Tibial artery (tissue), 4 donors: ENCODE measurements at regions of chr10 and their contacts with region 1.

Region 1: GRCh38 chr10:69428165-69428564 is 11.4 kb upstream of the TACR2 start:
- DNase-seq: no peak
- H3K4me3 ChIP-seq: no peak overlapping the region
- H3K27ac ChIP-seq: no peak overlapping the region
- H3K4me1 ChIP-seq: no peaks in the 10 kb centered on the region
- H3K27me3 ChIP-seq: no peaks in the 10 kb centered on the region
- CTCF ChIP-seq: no peak

Region 2: DNA sequence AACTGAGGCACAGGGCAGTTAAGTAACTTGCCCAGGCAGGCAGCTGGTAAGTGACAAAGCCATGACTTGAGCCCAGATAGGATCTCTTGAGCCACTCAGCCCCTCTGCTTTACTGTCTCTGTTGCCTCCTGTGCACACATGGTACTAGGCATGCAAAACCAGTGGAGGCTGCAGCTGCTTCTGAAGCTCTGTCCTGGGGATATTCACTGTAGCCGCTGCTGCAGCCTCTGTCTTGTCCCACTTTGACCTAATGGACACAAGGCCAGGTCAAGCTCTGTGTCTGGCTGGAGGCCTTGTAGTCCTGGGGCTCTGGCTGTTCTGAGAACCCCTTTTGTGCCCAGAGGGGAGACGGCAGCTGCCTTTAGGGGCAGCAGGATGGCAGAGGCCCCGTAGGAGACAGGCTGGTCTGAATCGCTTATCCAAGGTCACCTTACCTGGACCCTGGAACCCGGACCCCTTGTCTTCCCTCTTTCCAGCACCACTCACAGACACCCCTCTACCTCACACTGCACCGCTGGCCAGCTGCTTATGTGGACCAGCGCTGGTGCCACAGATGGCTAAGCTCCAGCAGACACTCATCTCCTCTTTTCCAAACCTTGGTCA is 80.7 kb after region 1 on chr10:
- intact Hi-C with region 1: loop called (anchors 2 kb)
- DNase-seq: peak in 1 of 2 donors; percentile 58
- H3K4me3 ChIP-seq: no peak overlapping the region
- H3K27ac ChIP-seq: no peak overlapping the region
- H3K4me1 ChIP-seq: peaks cover 0 to 12% (median 8%) of the 10 kb centered on the region in 4 donors
- H3K27me3 ChIP-seq: no peaks in the 10 kb centered on the region
- CTCF ChIP-seq: no peak